ENCODE measurements at regions of chr9 and their contacts with region 1.

Region 1: DNA sequence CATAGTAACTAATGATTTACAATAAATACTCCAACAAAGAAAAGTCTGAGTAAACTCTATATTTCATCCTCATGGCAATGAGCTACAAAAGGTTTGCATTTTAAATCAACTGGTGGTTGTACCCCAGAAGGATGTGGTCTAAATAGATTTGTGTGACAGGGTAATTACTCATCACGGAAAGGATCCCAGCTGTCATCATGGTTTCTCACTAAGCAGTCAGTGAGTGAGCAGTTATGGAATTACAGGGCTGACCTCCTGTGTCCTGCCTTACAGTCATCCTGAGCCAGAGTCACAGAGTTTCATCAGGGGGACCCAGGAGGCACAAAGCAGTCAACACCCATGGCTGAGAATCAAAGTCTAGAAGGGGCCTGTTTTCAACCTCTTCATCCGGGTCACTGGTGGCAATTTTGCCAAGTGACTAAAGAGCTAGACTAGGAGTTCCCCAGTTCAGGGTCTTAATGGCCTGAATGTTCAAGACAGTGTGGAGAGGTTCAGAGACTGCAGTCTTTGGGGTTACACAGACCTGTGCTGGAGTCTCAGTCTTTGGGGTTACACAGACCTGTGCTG is 210.7 kb upstream of the SLC24A2 start:
- DNase-seq: peak; percentile 85
- H3K4me3 Mint-ChIP-seq: no peak overlapping the region
- H3K27ac Mint-ChIP-seq: peak overlapping the region; percentile 88
- H3K4me1 Mint-ChIP-seq: peaks cover 49% of the 10 kb centered on the region
- H3K27me3 Mint-ChIP-seq: peaks cover 1% of the 10 kb centered on the region

Region 2: GRCh38 chr9:19771446-19771845 is 228.1 kb before region 1 on chr9:
- CTCF ChIA-PET with region 1: no interaction called
- POLR2A ChIA-PET with region 1: no interaction called
- intact Hi-C with region 1: no loop called
- DNase-seq: no peak
- H3K4me3 Mint-ChIP-seq: no peak overlapping the region
- H3K27ac Mint-ChIP-seq: no peak overlapping the region
- H3K4me1 Mint-ChIP-seq: no peaks in the 10 kb centered on the region
- H3K27me3 Mint-ChIP-seq: peaks cover 3% of the 10 kb centered on the region

Region 3: GRCh38 chr9:19925817-19926503 is 73.6 kb before region 1 on chr9:
- CTCF ChIA-PET with region 1: no interaction called
- POLR2A ChIA-PET with region 1: no interaction called
- intact Hi-C with region 1: loop called (anchors 1 kb)
- DNase-seq: peak; percentile 86
- H3K4me3 Mint-ChIP-seq: peak overlapping the region; percentile 50
- H3K27ac Mint-ChIP-seq: no peak overlapping the region
- H3K4me1 Mint-ChIP-seq: peaks cover 15% of the 10 kb centered on the region
- H3K27me3 Mint-ChIP-seq: peaks cover 12% of the 10 kb centered on the region

Region 4: DNA sequence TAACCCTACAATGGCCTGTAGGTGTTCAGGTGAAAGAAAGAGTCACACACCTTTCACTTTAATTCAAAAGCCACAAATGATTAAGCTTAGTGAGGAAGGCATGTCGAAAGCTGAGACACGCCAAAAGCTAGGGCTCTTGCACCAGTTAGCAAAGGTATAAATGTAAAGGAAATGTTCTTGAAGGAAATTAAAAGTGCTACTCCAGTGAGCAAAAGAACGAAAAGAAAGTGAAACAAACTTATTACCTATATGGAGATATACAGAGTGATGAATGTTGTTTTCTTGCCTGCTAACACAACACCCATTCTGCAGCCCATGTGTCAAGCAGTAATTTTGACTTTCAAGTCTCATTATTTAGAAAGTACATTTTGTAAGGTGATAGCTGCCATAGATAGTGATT is 43.5 kb after region 1 on chr9:
- CTCF ChIA-PET with region 1: interaction called, 3 read pairs
- POLR2A ChIA-PET with region 1: no interaction called
- intact Hi-C with region 1: loop called (anchors 1 kb)
- DNase-seq: peak; percentile 23
- H3K4me3 Mint-ChIP-seq: peak overlapping the region; percentile 53
- H3K27ac Mint-ChIP-seq: peak overlapping the region; percentile 70
- H3K4me1 Mint-ChIP-seq: peaks cover 30% of the 10 kb centered on the region
- H3K27me3 Mint-ChIP-seq: no peaks in the 10 kb centered on the region

Region 5: GRCh38 chr9:20125727-20126126 is 126.2 kb after region 1 on chr9:
- CTCF ChIA-PET with region 1: no interaction called
- POLR2A ChIA-PET with region 1: no interaction called
- intact Hi-C with region 1: no loop called
- DNase-seq: no peak
- H3K4me3 Mint-ChIP-seq: no peak overlapping the region
- H3K27ac Mint-ChIP-seq: no peak overlapping the region
- H3K4me1 Mint-ChIP-seq: no peaks in the 10 kb centered on the region
- H3K27me3 Mint-ChIP-seq: no peaks in the 10 kb centered on the region

Region 6: DNA sequence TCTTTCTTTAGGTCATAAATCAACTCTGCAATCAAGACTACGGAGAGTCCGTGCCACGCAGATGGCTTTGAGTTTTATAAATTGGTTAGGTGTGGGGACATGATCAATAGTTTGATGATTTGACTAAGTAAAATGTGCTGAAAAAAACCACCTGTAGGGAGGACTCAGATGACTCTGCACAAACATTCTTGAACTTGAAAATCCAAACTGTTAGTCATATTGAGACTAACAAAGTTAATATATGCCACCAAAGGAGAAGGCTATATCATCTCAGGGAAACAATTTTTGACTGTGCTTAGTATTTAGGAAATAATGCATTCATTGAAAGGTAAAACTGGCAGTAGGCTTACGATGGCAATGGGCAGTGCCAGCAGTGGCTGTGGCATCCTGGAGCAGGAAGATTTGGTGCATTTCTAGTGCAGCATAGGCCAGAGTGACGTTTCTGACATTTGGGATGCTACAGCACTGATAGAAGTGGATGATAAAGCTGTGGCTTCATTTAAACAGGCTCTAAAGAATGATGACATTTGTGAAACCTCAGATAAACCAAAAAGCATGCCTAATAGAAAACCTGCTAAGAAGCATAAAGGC is 331.6 kb after region 1 on chr9:
- CTCF ChIA-PET with region 1: no interaction called
- POLR2A ChIA-PET with region 1: no interaction called
- intact Hi-C with region 1: loop called (anchors 1 kb)
- DNase-seq: peak; percentile 37
- H3K4me3 Mint-ChIP-seq: no peak overlapping the region
- H3K27ac Mint-ChIP-seq: peak overlapping the region; percentile 63
- H3K4me1 Mint-ChIP-seq: peaks cover 20% of the 10 kb centered on the region
- H3K27me3 Mint-ChIP-seq: no peaks in the 10 kb centered on the region

Region 7: GRCh38 chr9:21031091-21031807 is 1031.7 kb after region 1 on chr9 and contains the start of gene HACD4:
- CTCF ChIA-PET with region 1: no interaction called
- POLR2A ChIA-PET with region 1: no interaction called
- intact Hi-C with region 1: loop called (anchors 1 kb)
- DNase-seq: peak; percentile 77
- H3K4me3 Mint-ChIP-seq: peak within 1 kb of the TSS; percentile 60
- H3K27ac Mint-ChIP-seq: peak within 1 kb of the TSS; percentile 66
- H3K4me1 Mint-ChIP-seq: peaks cover 21% of the 10 kb centered on the region
- H3K27me3 Mint-ChIP-seq: no peaks in the 10 kb centered on the region
- total RNA-seq, gene HACD4: 1.9 to 2.4 TPM